Common myeloid progenitor, CD34-positive (primary cell): ENCODE measurements at regions of chr1 and their contacts with region 1.

Region 1: DNA sequence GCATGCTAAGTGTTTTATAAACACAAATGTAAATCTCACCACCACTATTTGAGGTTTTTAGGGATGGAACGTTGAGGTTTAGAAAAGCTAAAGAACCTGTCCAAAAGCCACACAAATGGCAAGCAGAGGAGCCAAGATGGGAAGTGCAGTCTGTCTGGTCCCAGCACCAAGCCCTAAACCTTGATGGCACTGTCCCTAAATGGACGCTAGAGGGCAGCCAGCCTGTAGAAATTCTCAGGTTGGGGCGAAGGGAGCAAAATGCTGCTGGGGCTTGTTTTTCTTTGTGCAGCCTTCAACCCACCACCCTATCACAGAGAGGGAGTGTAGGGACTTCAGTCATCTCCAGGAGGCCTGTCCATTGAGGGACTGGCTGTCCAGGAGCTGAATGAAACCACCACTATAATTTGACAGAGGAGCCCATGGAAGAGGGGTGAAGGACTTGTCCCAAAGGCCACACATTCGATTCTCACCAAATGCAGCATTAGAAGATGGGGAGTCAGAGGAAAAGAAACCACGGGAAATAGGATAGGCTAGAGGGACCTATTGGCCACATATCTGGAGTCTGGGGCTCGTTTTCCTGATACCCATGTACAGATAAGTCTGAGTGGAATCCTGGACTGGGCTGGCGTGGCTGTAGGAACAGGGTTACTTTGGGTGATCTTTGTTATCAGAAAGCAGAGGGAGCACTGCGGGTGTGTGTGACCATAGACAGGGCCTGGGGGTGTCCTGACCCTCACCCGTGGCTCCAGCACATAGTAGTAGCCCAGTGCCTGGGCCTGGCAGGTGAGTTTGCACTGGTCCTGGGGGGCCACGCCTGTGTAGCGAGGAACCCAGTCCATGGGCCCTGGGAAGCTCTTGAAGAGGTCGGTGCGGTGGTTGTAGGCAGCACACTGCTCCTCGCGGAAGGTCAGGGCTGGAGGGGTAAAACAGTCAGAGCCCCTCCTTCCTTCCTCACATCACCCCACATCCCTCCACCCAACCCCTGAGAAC is 6.1 kb downstream of the ADAMTS4 start:
- DNase-seq: peak; percentile 63 to 82 (median 79)
- H3K4me3 ChIP-seq: no peak overlapping the region
- H3K27ac ChIP-seq: no peak overlapping the region
- H3K4me1 ChIP-seq: peaks cover 3 to 15% (median 10%) of the 10 kb centered on the region in 4 experiments
- H3K27me3 ChIP-seq: no peaks in the 10 kb centered on the region

Region 2: GRCh38 chr1:161165742-161166668 is 26.8 kb before region 1 on chr1 and contains the start of gene PPOX:
- CTCF ChIA-PET with region 1: interaction called, 14 read pairs
- POLR2A ChIA-PET with region 1: no interaction called
- DNase-seq: peak; percentile 97 to 99 (median 99)
- H3K4me3 ChIP-seq: peak within 1 kb of the TSS; percentile 53 to 91 (median 77)
- H3K27ac ChIP-seq: peak within 1 kb of the TSS; percentile 97 to 98
- H3K4me1 ChIP-seq: peaks cover 3 to 29% (median 24%) of the 10 kb centered on the region in 4 experiments
- H3K27me3 ChIP-seq: no peaks in the 10 kb centered on the region

Region 3: GRCh38 chr1:161177112-161177935 is 15.4 kb before region 1 on chr1 and contains the start of gene B4GALT3:
- CTCF ChIA-PET with region 1: interaction called, 25 read pairs
- POLR2A ChIA-PET with region 1: no interaction called
- DNase-seq: peak; percentile 83 to 90 (median 86)
- H3K4me3 ChIP-seq: peak within 1 kb of the TSS; percentile 65 to 96 (median 94)
- H3K27ac ChIP-seq: peak within 1 kb of the TSS; percentile 77 to 86
- H3K4me1 ChIP-seq: peaks cover 1 to 32% (median 22%) of the 10 kb centered on the region in 4 experiments
- H3K27me3 ChIP-seq: no peaks in the 10 kb centered on the region

Region 4: DNA sequence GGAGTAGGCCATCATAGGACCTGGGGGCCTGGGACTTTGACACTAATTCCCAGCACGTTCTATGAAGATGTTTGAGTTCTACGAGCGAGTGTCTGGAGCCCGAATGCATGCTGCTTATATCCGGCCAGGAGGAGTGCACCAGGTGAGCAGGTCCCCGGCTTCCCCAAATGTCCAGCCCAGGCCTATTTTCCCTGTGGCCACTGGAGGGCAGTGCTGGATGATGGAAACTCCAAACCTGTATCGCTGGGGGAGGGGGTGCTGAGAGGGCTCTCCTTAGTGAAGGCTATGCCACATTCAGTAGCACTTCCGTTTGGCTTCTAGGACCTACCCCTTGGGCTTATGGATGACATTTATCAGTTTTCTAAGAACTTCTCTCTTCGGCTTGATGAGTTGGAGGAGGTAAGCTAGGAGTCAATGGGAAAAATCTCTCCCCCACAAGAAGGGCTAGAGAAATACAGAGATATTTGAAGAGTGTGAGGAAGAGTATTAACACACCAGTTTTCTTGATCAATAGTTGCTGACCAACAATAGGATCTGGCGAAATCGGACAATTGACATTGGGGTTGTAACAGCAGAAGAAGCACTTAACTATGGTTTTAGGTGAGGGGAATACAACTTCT is 17.1 kb after region 1 on chr1:
- CTCF ChIA-PET with region 1: interaction called, 41 read pairs
- POLR2A ChIA-PET with region 1: no interaction called
- DNase-seq: peak; percentile 82 to 89 (median 84)
- H3K4me3 ChIP-seq: no peak overlapping the region
- H3K27ac ChIP-seq: no peak overlapping the region
- H3K4me1 ChIP-seq: peaks cover 2 to 24% (median 8%) of the 10 kb centered on the region in 4 experiments
- H3K27me3 ChIP-seq: no peaks in the 10 kb centered on the region

Region 5: GRCh38 chr1:161305867-161306519 is 113.2 kb after region 1 on chr1:
- CTCF ChIA-PET with region 1: interaction called, 11 read pairs
- POLR2A ChIA-PET with region 1: no interaction called
- DNase-seq: peak; percentile 95 to 96 (median 96)
- H3K4me3 ChIP-seq: peak overlapping the region; percentile 25 to 92 (median 75)
- H3K27ac ChIP-seq: peak overlapping the region; percentile 61 to 86
- H3K4me1 ChIP-seq: peaks cover 9 to 44% (median 30%) of the 10 kb centered on the region in 4 experiments
- H3K27me3 ChIP-seq: no peaks in the 10 kb centered on the region

Region 6: DNA sequence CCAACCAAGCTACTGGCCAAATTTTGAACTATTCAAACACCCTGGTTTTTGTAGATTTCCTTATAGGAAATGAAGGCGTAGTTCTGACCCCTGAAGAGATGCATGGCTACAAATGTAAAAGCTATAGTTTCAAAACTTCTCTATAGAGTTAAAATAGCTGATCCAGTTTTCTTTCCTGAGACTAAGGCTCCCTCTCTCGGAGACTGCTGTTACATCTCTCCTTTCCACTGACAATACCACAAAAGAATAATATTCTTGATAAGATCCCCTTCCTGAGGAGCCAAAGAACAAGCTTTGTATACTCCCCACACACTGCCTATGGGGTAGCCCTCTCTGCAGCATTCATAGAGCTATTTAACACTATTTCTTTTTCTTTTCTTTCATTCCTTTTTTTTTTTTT is 181.6 kb after region 1 on chr1:
- CTCF ChIA-PET with region 1: interaction called, 25 read pairs
- POLR2A ChIA-PET with region 1: no interaction called
- DNase-seq: peak; percentile 33 to 51 (median 49)
- H3K4me3 ChIP-seq: no peak overlapping the region
- H3K27ac ChIP-seq: no peak overlapping the region
- H3K4me1 ChIP-seq: peaks cover 0 to 4% (median 0%) of the 10 kb centered on the region in 4 experiments
- H3K27me3 ChIP-seq: no peaks in the 10 kb centered on the region

Region 7: DNA sequence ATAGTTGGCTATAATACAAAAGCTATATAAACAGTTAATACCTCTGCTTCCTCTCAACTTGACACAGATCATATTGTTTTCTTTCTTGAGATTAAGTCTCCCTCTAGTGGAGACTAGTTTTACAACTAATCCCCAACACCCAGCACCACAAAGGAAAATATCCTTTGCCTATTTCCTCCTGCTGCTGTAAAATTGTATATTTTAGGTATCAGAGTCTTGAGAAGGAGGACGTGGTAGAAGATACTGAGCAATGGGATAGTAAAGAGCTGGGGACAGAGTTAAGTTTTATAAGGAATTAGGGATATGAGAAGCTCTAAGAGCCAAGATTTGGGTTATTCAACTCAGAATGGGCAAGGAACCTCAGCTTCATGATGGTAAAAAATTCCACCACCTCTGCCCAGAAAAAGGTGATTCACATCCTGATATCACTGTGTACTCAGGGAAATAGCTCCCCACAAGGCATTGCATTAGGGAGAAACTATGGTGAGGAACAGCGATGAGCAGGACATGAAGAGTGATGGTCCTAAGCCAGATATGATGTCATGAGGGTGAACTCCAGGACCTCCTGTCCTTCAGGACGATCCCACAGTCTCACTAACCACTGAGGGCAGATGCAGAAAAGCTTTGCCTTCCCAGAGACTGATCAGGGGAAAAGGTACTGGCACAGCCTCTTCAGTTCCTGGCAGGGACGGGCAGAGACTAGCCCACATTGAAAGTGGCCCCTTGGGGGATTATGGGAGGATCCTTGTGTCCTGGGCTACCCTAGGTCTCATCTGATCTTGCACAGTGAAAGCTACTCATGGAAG is 189.6 kb after region 1 on chr1:
- CTCF ChIA-PET with region 1: interaction called, 27 read pairs
- POLR2A ChIA-PET with region 1: no interaction called
- DNase-seq: peak; percentile 58 to 75 (median 71)
- H3K4me3 ChIP-seq: no peak overlapping the region
- H3K27ac ChIP-seq: no peak overlapping the region
- H3K4me1 ChIP-seq: peaks cover 0 to 5% (median 4%) of the 10 kb centered on the region in 4 experiments
- H3K27me3 ChIP-seq: no peaks in the 10 kb centered on the region